CD8-positive, alpha-beta T cell (primary cell): ENCODE measurements at regions of chr17 and their contacts with region 1.

Region 1: GRCh38 chr17:10115071-10115539 is 83.3 kb downstream of the GAS7 start:
- DNase-seq: peak; percentile 58 to 95 (median 80)
- ATAC-seq: peak; percentile 84
- H3K4me3 ChIP-seq: peak overlapping the region; percentile 44 to 47
- H3K4me3 Mint-ChIP-seq: peak overlapping the region; percentile 51
- H3K27ac ChIP-seq: peak overlapping the region; percentile 67 to 96
- H3K27ac Mint-ChIP-seq: peak overlapping the region; percentile 96
- H3K4me1 ChIP-seq: peaks cover 52% of the 10 kb centered on the region
- H3K4me1 Mint-ChIP-seq: peaks cover 76% of the 10 kb centered on the region
- H3K27me3 ChIP-seq: no peaks in the 10 kb centered on the region
- H3K27me3 Mint-ChIP-seq: no peaks in the 10 kb centered on the region
- CTCF ChIP-seq: no peak

Region 2: GRCh38 chr17:9361188-9361955 is 753.7 kb before region 1 on chr17:
- CTCF ChIA-PET with region 1: no interaction called
- POLR2A ChIA-PET with region 1: no interaction called
- intact Hi-C with region 1: no loop called
- DNase-seq: no peak
- ATAC-seq: no peak
- H3K4me3 ChIP-seq: no peak overlapping the region
- H3K4me3 Mint-ChIP-seq: no peak overlapping the region
- H3K27ac ChIP-seq: no peak overlapping the region
- H3K27ac Mint-ChIP-seq: no peak overlapping the region
- H3K4me1 ChIP-seq: no peaks in the 10 kb centered on the region
- H3K4me1 Mint-ChIP-seq: peaks cover 11% of the 10 kb centered on the region
- H3K27me3 ChIP-seq: no peaks in the 10 kb centered on the region
- H3K27me3 Mint-ChIP-seq: no peaks in the 10 kb centered on the region
- CTCF ChIP-seq: no peak

Region 3: DNA sequence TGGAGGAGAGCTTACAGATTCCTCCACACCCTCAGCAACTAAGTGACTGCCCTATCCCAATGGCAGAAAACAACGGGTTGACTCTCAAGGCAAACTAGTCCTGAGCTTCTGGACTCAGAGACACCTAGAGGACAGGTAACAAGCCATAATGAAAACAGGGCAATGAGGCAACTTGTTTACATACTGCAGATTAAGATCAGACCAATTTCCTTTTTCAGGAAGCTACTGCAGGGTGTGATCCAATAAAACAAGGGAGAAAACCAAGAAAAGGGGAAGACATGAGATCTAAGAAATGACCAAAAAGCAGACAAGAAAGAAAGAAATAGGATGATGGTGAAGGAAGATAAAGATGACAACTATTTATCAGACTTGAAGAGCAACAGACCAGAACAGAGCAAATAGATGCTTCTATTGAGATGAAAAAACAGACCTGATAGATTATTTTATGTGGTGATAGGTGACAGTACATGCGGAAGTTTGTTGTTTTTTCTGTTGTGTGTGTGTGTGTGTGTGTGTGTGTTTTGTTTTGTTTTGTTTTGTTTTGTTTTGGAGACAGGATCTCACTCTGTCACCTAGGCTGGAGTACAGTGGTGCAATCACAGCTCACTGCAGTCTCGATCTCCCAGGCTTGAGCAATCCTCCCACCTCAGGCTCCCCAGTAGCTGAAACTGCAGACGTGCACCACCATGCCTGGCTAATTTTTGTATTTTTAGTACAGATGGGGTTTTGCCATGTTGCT is 37.4 kb before region 1 on chr17:
- CTCF ChIA-PET with region 1: no interaction called
- POLR2A ChIA-PET with region 1: no interaction called
- intact Hi-C with region 1: loop called in 1 of 2 experiments (anchors 5 kb)
- DNase-seq: peak in 3 of 9 experiments; percentile 13 to 63 (median 52)
- ATAC-seq: peak; percentile 56
- H3K4me3 ChIP-seq: no peak overlapping the region
- H3K4me3 Mint-ChIP-seq: no peak overlapping the region
- H3K27ac ChIP-seq: peak overlapping the region in 1 of 2 experiments; percentile 54
- H3K27ac Mint-ChIP-seq: peak overlapping the region; percentile 24
- H3K4me1 ChIP-seq: no peaks in the 10 kb centered on the region
- H3K4me1 Mint-ChIP-seq: peaks cover 30% of the 10 kb centered on the region
- H3K27me3 ChIP-seq: no peaks in the 10 kb centered on the region
- H3K27me3 Mint-ChIP-seq: no peaks in the 10 kb centered on the region
- CTCF ChIP-seq: no peak

Region 4: GRCh38 chr17:10149573-10150399 is 34.7 kb after region 1 on chr17:
- CTCF ChIA-PET with region 1: no interaction called
- POLR2A ChIA-PET with region 1: no interaction called
- intact Hi-C with region 1: loop called (anchors 1 to 5 kb)
- DNase-seq: peak in 4 of 9 experiments; percentile 26 to 85 (median 50)
- ATAC-seq: peak; percentile 44
- H3K4me3 ChIP-seq: no peak overlapping the region
- H3K4me3 Mint-ChIP-seq: peak overlapping the region; percentile 30
- H3K27ac ChIP-seq: peak overlapping the region in 1 of 2 experiments; percentile 9
- H3K27ac Mint-ChIP-seq: peak overlapping the region; percentile 56
- H3K4me1 ChIP-seq: peaks cover 4% of the 10 kb centered on the region
- H3K4me1 Mint-ChIP-seq: peaks cover 21% of the 10 kb centered on the region
- H3K27me3 ChIP-seq: no peaks in the 10 kb centered on the region
- H3K27me3 Mint-ChIP-seq: no peaks in the 10 kb centered on the region
- CTCF ChIP-seq: no peak

Region 5: DNA sequence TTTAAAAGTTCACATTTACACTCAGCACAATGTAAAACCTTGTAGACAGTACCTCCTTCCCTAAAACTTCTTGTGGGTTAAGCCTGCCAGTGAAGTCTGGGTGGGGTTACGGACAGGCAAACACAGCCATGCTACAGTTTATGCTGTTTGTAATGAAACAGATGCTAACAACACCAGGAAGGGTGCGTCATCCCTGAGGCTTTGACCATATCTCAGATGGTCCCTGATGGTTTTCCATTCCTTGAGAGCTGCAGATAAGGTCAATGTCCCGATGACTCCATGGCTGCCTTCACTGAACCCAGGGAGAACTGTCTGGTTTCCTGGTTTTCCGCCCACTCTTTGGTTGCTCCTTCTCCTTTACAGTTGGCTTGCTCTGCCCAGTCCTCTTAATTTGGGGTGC is 54.2 kb after region 1 on chr17:
- CTCF ChIA-PET with region 1: no interaction called
- POLR2A ChIA-PET with region 1: interaction called, 3 read pairs
- intact Hi-C with region 1: loop called in 1 of 2 experiments (anchors 5 kb)
- DNase-seq: no peak
- ATAC-seq: no peak
- H3K4me3 ChIP-seq: no peak overlapping the region
- H3K4me3 Mint-ChIP-seq: no peak overlapping the region
- H3K27ac ChIP-seq: no peak overlapping the region
- H3K27ac Mint-ChIP-seq: no peak overlapping the region
- H3K4me1 ChIP-seq: peaks cover 12% of the 10 kb centered on the region
- H3K4me1 Mint-ChIP-seq: peaks cover 22% of the 10 kb centered on the region
- H3K27me3 ChIP-seq: no peaks in the 10 kb centered on the region
- H3K27me3 Mint-ChIP-seq: peaks cover 15% of the 10 kb centered on the region
- CTCF ChIP-seq: no peak

Region 6: GRCh38 chr17:10198509-10199253 is 83.6 kb after region 1 on chr17 and contains the start of gene GAS7:
- CTCF ChIA-PET with region 1: no interaction called
- POLR2A ChIA-PET with region 1: no interaction called
- intact Hi-C with region 1: loop called (anchors 1 to 2 kb)
- DNase-seq: peak; percentile 8 to 86 (median 66)
- ATAC-seq: peak; percentile 82
- H3K4me3 ChIP-seq: peak within 1 kb of the TSS; percentile 27 to 35
- H3K4me3 Mint-ChIP-seq: peak within 1 kb of the TSS; percentile 79
- H3K27ac ChIP-seq: no peak within 1 kb of the TSS
- H3K27ac Mint-ChIP-seq: peak within 1 kb of the TSS; percentile 81
- H3K4me1 ChIP-seq: peaks cover 11% of the 10 kb centered on the region
- H3K4me1 Mint-ChIP-seq: peaks cover 10% of the 10 kb centered on the region
- H3K27me3 ChIP-seq: peaks cover 0 to 12% of the 10 kb centered on the region in 2 experiments
- H3K27me3 Mint-ChIP-seq: peaks cover 21% of the 10 kb centered on the region
- CTCF ChIP-seq: no peak
- total RNA-seq, gene GAS7: 2.9 to 4.2 TPM